Dorsolateral prefrontal cortex (tissue), 120 donors: ENCODE measurements at regions of chr1 and their contacts with region 1.

Region 1: DNA sequence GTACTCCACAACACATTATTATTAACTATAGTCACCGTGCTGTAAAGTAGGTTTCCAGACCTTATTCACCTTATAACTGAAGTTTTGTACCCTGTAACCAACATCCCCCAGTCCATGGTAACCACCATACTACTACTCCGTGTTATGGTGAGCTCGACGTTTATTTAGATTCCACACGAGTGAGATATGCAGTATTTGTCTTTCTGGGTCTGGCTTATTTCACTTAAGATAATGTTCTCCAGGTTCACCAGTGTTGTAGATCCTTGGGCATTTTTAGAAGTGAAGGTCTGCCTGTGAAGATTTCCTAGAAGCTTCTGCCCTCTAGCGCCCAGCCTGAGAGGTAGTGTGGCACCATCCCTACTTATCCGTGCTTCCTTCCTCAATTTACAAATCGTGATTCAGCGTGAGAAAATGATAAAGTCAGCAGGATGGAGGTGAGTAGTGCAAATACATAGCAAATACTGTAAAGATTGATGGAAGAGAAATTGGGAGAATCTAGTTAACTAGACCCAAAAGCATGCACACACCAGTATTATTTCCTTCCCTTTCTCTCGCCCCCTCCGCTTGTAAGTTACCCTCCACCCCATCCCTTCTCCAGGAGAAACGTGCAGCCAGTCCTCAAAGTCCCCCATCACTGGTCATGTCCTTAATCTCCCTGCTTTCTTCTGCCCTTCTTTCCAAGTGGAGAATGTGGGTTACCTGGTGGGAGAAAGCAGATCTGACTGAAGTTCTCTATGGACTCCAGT is 36.0 kb upstream of the DISC1 start:
- DNase-seq: peak in 7 of 10 donors; percentile 17 to 59 (median 54)
- H3K4me3 ChIP-seq: no peak overlapping the region
- H3K27ac ChIP-seq: no peak overlapping the region
- H3K27me3 ChIP-seq: no peaks in the 10 kb centered on the region
- CTCF ChIP-seq: peak; percentile 46 to 85 (median 72)

Region 2: DNA sequence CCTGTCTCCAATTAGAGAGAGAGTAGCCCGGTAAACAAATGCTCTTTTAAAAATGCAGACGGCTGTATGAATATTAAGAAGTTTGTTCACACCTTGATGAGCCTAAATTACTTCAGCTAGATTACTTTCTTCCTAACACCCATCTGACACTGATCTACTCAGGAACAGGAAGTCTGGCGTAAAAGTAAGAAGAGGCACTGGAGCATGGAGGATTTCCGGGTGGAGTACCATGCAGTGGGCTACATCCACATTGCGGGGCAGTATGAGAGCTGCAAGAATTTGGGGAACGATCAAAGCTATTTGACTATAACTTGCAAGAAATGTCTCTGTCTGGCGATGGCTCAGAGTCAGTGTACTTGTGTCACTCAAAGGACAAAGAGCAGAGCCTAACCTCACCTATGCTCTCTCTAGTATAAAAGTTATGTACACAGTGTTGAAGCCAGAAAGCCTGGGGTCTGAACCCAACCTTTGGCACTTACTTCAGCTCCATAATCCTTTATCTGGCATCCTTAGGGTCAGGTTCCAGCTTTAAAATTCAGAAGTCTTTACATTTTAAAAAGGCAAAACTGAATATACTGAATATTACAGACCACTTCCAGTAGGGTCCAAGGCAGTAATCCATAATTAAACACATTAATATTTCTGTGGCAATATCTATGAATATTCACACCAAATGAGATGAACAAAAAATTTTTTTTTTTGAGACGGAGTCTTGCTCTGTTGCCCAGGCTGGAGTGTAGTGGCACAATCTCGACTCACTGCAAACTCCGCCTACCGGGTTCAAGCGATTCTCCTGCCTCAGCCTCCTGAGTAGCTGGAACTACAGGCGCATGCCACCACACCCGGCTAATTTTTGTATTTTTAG is 357.5 kb before region 1 on chr1:
- intact Hi-C with region 1: loop called in 1 of 2 experiments (anchors 10 kb)
- DNase-seq: no peak
- H3K4me3 ChIP-seq: no peak overlapping the region
- H3K27ac ChIP-seq: no peak overlapping the region
- H3K27me3 ChIP-seq: no peaks in the 10 kb centered on the region
- CTCF ChIP-seq: no peak

Region 3: DNA sequence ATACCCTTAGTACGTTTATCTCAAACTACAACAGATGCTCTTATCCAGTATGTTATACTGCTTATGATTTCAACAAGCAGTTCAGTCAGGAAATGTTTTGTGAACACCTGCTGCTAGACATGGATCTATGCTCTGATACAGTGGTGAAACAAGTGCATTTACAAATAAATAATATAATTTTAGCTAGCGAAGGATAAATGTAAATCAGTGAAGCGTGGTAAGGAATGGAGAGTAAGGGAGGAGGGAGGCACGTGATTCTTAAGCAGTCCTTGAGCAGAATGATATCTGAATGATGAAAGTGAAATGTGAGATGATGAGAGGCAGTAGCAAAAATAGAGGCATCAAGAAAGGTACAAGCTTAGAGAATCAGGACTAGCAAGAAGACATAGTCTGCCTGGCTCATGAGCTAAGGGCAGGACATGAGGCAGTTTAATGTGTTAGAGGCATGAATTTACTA is 55.9 kb before region 1 on chr1:
- intact Hi-C with region 1: no loop called
- DNase-seq: no peak
- H3K4me3 ChIP-seq: peak overlapping the region in 1 of 59 donors; percentile 15
- H3K27ac ChIP-seq: peak overlapping the region in 2 of 59 donors; percentile 11 to 19
- H3K27me3 ChIP-seq: no peaks in the 10 kb centered on the region
- CTCF ChIP-seq: no peak